Activated T-helper 1 cell treated with anti-CD3 and anti-CD28 coated beads, Interleukin-12 subunit alpha, Interleukin-12 subunit beta, Interleukin-2, Interleukin-4 antibody, amounts not matched to agents 30 ng/mL and 10 ng/mL and 1 ng/mL, durations not matched to agents 14 hours and 24 hours and 36 hours (primary cell): ENCODE measurements at regions of chr11 and their contacts with region 1.

Region 1: GRCh38 chr11:17598700-17599459 is 51.8 kb downstream of the OTOG start:
- DNase-seq: peak; percentile 44
- H3K4me3 Mint-ChIP-seq: no peak overlapping the region
- H3K27ac Mint-ChIP-seq: no peak overlapping the region
- H3K4me1 Mint-ChIP-seq: peaks cover 16% of the 10 kb centered on the region
- H3K27me3 Mint-ChIP-seq: peaks cover 6% of the 10 kb centered on the region

Region 2: GRCh38 chr11:17489751-17490150 is 109.1 kb before region 1 on chr11:
- intact Hi-C with region 1: no loop called
- DNase-seq: no peak
- H3K4me3 Mint-ChIP-seq: no peak overlapping the region
- H3K27ac Mint-ChIP-seq: no peak overlapping the region
- H3K4me1 Mint-ChIP-seq: no peaks in the 10 kb centered on the region
- H3K27me3 Mint-ChIP-seq: peaks cover 26% of the 10 kb centered on the region

Region 3: DNA sequence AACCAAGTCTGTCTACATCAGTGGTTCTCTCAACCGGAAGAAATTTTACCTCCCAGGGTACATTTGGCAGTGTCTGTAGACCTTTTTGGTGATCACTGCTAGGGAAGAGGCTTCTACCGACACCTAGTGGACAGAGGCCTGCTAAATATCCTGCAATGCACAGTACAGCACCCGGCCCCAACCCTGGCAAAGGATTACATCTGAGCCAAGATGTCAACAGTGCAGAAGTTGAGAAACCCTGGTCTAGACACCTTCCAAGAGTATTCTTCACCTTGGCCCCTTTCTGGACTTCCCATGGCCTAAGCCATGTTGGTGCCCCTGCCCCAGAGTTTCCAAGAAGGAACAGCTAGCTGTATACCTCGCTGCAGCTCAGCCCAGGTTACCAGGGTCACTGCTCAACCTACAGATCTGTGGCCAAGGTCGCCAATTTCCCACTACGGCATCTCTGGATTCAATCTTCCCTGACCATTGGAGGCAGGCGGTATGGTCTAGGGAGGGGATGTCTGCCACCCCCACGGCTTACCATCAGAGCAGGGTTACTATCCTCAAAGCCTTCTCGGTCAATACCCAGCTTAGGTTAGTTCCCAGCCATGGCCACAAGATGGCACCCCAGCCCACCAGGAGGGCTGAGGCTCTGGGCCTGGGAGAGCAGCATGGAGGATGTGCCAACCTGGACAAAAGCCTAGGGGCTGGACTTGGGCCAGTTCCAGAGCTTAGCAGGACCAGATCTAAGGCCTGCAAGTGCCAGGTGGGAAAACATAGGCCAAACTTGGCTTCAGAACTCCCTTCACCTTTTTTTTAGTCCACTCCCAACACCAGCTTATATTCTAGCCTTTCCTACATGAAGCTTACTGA is 132.0 kb after region 1 on chr11:
- intact Hi-C with region 1: loop called (anchors 1 kb)
- DNase-seq: peak; percentile 48
- H3K4me3 Mint-ChIP-seq: no peak overlapping the region
- H3K27ac Mint-ChIP-seq: no peak overlapping the region
- H3K4me1 Mint-ChIP-seq: no peaks in the 10 kb centered on the region
- H3K27me3 Mint-ChIP-seq: peaks cover 49% of the 10 kb centered on the region